ENCODE measurements at regions of chr1 and their contacts with region 1.

Region 1: GRCh38 chr1:23577056-23578004 is 18.0 kb upstream of the ID3 start:
- DNase-seq: peak; percentile 95
- ATAC-seq: peak; percentile 72
- H3K4me3 ChIP-seq: peak overlapping the region; percentile 12; the same call in 1 of the 2 replicates
- H3K27ac ChIP-seq: peak overlapping the region; percentile 96
- H3K4me1 ChIP-seq: peaks cover 28% of the 10 kb centered on the region
- H3K27me3 ChIP-seq: no peaks in the 10 kb centered on the region
- CTCF ChIP-seq: no peak
- POLR2A ChIP-seq: peak; percentile 87
- RAD21 ChIP-seq: no peak; the same call in 1 of the 2 replicates

Region 2: DNA sequence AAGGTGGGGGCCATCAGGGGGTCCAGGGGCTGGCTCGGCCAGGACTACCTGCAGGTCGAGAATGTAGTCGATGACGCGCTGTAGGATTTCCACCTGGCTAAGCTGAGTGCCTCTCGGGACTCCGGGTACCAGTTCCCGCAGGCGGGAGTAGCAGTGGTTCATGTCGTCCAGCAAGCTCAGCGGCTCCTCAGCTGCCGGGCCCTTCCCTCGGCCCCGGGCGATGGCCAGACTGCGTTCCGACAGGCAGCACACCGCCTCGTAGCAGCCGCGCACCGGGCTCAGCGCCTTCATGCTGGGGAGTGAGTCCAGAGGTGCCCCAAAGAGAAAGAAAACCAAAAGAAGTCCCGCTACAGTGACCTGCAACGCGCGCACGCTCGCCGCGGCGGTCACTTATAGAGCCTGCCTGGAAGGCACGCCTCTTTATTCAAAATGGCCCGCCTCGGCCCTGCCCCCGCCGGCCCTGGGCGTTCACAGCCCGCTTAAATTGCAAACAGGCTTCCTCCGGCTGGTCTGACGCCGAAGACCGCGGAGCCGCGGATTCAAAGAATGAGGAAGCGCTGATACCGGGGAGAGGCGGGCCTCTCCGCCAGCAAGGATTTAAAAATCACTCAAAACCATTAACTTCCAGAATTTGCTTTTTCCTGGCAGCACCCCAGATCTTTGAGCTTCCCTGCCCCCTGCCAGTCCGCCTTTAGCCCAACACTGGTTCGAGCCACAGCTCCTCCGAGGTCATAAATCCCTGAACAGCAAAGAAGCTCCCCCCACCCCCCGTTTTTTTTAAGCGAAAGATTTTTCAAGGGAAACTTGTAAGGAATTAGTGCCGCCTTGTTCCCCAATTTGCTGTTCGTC is 18.0 kb before region 1 on chr1 and contains the start of gene ID3:
- CTCF ChIA-PET with region 1: interaction called, 3 read pairs
- POLR2A ChIA-PET with region 1: interaction called, 11 read pairs
- dilution Hi-C with region 1: no loop called
- in situ Hi-C with region 1: no loop called
- intact Hi-C with region 1: loop called (anchors 2 kb)
- DNase-seq: peak; percentile 96
- ATAC-seq: peak; percentile 69
- H3K4me3 ChIP-seq: peak within 1 kb of the TSS; percentile 76
- H3K27ac ChIP-seq: peak within 1 kb of the TSS; percentile 91
- H3K4me1 ChIP-seq: peaks cover 37% of the 10 kb centered on the region
- H3K27me3 ChIP-seq: no peaks in the 10 kb centered on the region
- CTCF ChIP-seq: no peak
- POLR2A ChIP-seq: peak; percentile 99
- RAD21 ChIP-seq: no peak; the same call in none of the 2 replicates
- total RNA-seq, gene ID3: 109 and 171 TPM in 2 replicates

Region 3: DNA sequence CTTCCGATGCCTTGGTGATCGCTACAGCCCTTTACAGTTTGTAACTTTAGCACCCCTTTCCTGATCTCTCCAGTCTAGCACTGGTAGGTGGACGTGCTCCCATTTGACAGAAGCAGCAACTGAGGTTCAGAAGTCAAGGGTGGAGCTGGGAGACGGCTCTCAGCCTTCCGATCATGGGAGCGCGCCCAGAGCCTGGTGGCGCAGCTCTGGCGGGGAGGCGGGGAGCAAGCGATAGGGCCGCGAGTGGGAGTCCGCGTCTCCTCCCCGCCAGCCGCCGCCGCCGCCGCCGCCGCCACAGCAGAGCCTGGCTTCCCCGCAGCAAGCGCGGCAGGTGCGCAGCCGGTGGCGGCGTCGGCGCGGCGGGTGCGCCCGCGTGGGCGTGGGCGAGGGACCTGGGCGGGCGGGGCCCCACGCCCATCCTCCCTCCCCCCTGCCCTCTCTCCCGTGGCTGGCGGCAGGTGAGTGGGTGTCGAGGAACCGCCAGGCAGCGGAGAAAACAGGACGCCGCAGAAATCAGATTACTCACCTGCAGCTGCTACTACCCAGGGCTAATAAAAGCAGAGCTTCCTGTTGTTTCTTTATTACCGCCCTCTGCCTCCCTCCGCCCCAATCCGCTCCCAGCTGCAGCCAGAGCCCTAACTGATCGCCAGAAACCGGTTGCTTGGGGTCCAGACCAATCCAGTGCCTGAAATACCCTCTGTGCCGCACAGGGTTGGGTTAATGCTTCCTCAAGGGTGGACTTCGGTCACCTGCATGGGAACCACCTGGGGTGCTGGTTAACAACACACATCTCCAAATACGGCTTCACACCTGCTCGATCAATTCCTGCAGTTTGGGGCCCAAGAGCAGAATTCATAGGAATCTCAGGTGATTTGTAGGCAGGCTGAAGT is 42.2 kb after region 1 on chr1:
- CTCF ChIA-PET with region 1: no interaction called
- POLR2A ChIA-PET with region 1: no interaction called
- dilution Hi-C with region 1: no loop called
- in situ Hi-C with region 1: no loop called
- intact Hi-C with region 1: no loop called
- DNase-seq: peak; percentile 13
- ATAC-seq: peak; percentile 66
- H3K4me3 ChIP-seq: peak overlapping the region; percentile 34
- H3K27ac ChIP-seq: no peak overlapping the region
- H3K4me1 ChIP-seq: no peaks in the 10 kb centered on the region
- H3K27me3 ChIP-seq: peaks cover 35% of the 10 kb centered on the region
- CTCF ChIP-seq: no peak
- POLR2A ChIP-seq: no peak
- RAD21 ChIP-seq: no peak

Measured in IMR-90 (cell line).